ENCODE measurements at regions of chr4 and their contacts with region 1.

Region 1: DNA sequence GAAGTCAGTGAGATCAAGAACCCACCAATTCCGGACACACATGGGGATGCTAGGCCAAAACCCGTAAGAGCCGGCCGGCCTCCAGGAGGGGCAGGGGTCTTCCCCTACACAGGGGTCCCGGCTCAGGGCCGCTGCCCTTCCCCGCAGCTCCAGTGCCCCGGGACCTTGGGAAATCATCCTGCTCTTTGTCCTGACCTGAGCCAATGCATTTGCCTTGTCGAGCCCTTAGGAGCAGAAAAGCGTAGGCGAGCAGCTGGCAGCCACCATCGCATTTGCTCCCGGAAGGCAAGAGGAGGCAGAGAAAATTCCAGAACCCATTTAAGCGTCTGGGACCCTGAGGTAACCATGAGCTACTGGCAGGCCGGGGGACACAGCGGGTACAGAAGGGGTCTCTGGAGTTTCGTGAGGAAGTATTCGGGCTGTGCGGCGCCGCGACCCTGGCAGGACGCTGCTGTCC is 7.4 kb upstream of the TNIP2 start:
- DNase-seq: peak; percentile 18
- CTCF ChIP-seq: no peak

Region 2: GRCh38 chr4:2781921-2782320 is 18.4 kb after region 1 on chr4:
- CTCF ChIA-PET with region 1: interaction called, 30 read pairs
- POLR2A ChIA-PET with region 1: no interaction called
- DNase-seq: no peak
- CTCF ChIP-seq: no peak

Region 3: DNA sequence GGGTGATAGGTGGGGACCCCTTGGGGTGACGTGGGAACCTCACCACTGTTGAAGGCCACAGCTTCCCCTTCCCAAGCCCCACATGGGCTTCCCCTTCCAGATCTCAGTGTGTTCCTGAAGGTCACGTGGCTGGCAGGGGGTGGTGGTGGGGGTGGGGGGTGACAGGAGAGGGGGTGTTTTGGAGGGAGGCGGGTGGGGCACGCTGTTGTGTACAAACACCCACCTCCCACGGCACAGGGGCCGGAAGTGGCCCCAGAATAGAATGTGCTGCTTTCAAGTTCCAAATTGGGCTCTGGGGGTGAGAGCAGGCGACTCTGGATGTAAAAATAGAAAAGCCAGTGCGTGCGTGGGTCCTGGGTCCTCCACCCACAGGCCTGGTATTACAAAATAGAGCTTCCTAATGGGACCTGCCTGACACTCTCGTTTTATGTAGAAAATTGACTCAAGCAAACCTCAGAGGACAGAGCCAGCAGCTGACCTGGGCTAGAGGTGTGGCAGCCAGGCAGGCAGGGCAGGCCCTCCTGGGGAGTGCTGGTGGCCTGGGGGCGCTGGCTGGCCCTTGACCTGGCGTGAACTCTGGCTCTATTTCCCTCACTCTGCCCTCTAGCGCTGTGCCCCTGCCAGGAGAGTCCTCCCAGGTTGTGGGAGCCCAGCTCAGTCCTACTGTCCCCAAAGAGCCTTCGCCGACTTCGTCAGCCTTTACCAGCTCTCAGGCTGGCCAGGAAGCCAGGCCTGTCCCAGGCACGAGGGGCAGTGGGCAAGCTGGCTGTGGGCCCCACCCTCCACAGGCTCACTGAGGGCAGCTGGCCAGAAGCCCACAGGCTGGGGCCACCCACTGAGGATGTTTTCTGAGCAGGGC is 23.9 kb after region 1 on chr4:
- CTCF ChIA-PET with region 1: interaction called, 30 read pairs
- POLR2A ChIA-PET with region 1: no interaction called
- DNase-seq: peak; percentile 83
- CTCF ChIP-seq: no peak

Region 4: GRCh38 chr4:2800691-2801596 is 37.4 kb after region 1 on chr4:
- CTCF ChIA-PET with region 1: interaction called, 15 read pairs
- POLR2A ChIA-PET with region 1: interaction called, 5 read pairs
- DNase-seq: peak; percentile 80
- CTCF ChIP-seq: no peak

Region 5: GRCh38 chr4:2817701-2818350 is 54.3 kb after region 1 on chr4:
- CTCF ChIA-PET with region 1: interaction called, 10 read pairs
- POLR2A ChIA-PET with region 1: no interaction called
- DNase-seq: peak; percentile 56
- CTCF ChIP-seq: no peak

Region 6: DNA sequence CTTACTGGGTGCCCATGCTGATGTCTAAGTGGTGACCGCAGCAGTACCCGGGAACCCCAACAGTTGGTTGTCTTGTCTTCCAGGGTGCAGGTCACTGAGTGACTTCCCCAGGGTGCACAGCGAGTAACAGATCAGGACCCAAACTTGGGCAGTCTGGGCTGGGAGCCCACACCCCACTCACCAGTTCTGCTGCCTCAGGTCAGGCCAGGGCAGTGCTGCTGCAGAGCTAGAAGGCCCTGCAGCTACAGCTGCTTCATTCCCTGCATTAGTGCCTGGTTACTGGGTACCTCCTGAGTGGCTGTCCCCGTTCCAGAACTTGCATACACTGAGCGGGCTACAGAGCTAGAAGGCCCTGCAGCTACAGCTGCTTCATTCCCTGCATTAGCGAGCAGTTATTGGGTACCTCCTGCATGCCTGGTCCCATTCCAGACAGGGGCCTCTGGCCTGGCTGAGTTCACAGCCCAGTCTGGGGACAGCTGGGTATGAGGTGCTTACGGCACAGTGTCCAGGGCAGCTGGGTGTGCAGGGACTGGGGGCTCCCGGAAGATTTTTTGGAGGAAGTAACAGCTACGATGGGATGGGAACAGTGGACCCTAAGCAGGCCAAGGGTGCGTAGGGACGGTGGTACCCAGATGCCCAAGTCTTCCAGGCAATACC is 70.9 kb after region 1 on chr4:
- CTCF ChIA-PET with region 1: interaction called, 12 read pairs
- POLR2A ChIA-PET with region 1: no interaction called
- DNase-seq: no peak
- CTCF ChIP-seq: no peak

Measured in GM10248 (cell line).